ENCODE measurements at regions of chr3 and their contacts with region 1.

Region 1: DNA sequence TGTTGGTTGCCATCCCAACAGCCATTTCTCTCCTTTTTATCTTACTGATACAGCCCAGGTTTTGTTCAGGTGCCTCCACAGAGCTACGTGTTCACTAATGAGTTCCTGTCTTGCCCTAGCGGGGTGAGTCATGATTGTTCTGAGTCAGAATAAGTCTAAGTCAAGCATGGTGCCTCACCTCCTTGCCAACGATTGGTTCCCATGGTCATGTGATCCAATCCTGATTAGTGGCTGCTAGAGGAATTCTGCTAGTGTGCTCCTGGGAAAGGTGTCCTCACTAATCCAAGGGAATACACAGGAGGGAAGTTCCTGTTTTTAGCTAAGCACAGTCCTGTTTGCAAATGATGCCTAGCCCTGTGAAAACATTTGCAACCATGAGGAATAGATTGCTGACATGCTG is 99.8 kb downstream of the NSUN3 start:
- DNase-seq: no peak
- ATAC-seq: no peak
- H3K4me3 ChIP-seq: no peak overlapping the region
- H3K27ac ChIP-seq: no peak overlapping the region
- H3K4me1 ChIP-seq: no peaks in the 10 kb centered on the region
- H3K27me3 ChIP-seq: no peaks in the 10 kb centered on the region
- CTCF ChIP-seq: no peak
- POLR2A ChIP-seq: no peak

Region 2: GRCh38 chr3:93969443-93969842 is 193.3 kb before region 1 on chr3:
- in situ Hi-C with region 1: no loop called
- intact Hi-C with region 1: no loop called
- DNase-seq: no peak
- ATAC-seq: no peak
- H3K4me3 ChIP-seq: no peak overlapping the region
- H3K27ac ChIP-seq: no peak overlapping the region
- H3K4me1 ChIP-seq: peaks cover 3% of the 10 kb centered on the region in 2 donors
- H3K27me3 ChIP-seq: no peaks in the 10 kb centered on the region
- CTCF ChIP-seq: no peak
- POLR2A ChIP-seq: no peak

Region 3: DNA sequence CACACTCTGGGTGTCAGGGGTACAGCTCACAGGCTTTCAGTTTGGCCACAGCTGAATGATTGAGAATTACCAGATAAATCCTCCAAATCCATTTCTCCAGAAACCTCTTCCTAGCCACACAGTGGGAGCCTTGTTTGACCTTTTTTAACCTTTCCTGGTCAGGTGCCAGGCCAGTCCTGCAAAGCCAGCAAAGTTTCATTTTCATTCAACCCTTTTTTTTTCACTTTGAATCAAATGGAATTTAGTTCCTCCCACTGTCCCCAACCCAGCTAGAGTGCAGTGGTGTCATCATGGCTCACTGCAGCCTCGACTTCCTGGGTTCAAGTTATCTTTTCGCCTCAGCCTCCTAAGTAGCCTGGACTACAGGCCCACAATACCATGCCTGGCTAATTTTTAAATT is 32.0 kb before region 1 on chr3:
- in situ Hi-C with region 1: no loop called
- intact Hi-C with region 1: no loop called
- DNase-seq: no peak
- ATAC-seq: no peak
- H3K4me3 ChIP-seq: no peak overlapping the region
- H3K27ac ChIP-seq: no peak overlapping the region
- H3K4me1 ChIP-seq: no peaks in the 10 kb centered on the region
- H3K27me3 ChIP-seq: no peaks in the 10 kb centered on the region
- CTCF ChIP-seq: no peak
- POLR2A ChIP-seq: no peak

Region 4: GRCh38 chr3:94210256-94210655 is 47.6 kb after region 1 on chr3:
- in situ Hi-C with region 1: no loop called
- intact Hi-C with region 1: no loop called
- DNase-seq: no peak
- ATAC-seq: no peak
- H3K4me3 ChIP-seq: no peak overlapping the region
- H3K27ac ChIP-seq: no peak overlapping the region
- H3K4me1 ChIP-seq: no peaks in the 10 kb centered on the region
- H3K27me3 ChIP-seq: no peaks in the 10 kb centered on the region
- CTCF ChIP-seq: no peak
- POLR2A ChIP-seq: no peak

Region 5: GRCh38 chr3:94269763-94270162 is 107.1 kb after region 1 on chr3:
- in situ Hi-C with region 1: loop called in 1 of 4 experiments (anchors 25 kb)
- intact Hi-C with region 1: no loop called
- DNase-seq: no peak
- ATAC-seq: no peak
- H3K4me3 ChIP-seq: no peak overlapping the region
- H3K27ac ChIP-seq: no peak overlapping the region
- H3K4me1 ChIP-seq: no peaks in the 10 kb centered on the region
- H3K27me3 ChIP-seq: no peaks in the 10 kb centered on the region
- CTCF ChIP-seq: no peak
- POLR2A ChIP-seq: no peak

Region 6: DNA sequence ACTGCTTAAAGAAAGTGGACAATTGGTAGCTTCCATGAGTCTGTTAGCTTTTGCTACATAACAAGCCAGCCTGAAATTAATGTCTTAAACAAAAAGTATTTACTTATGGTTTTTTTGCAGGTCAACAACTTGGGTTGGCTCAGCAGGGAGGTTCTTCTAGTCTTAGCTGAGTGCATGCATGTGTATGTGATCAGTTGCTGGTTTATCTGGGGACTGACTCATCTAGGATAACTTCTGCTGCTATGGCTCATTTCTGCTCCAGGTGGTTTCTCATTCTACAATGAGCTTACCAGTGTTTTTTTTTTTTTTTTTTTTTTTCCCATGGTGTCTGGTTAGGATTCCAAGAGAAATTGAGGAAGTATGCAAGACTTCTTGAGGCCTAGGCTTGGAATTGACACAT is 144.9 kb after region 1 on chr3:
- in situ Hi-C with region 1: no loop called
- intact Hi-C with region 1: no loop called
- DNase-seq: no peak
- ATAC-seq: no peak
- H3K4me3 ChIP-seq: no peak overlapping the region
- H3K27ac ChIP-seq: no peak overlapping the region
- H3K4me1 ChIP-seq: no peaks in the 10 kb centered on the region
- H3K27me3 ChIP-seq: no peaks in the 10 kb centered on the region
- CTCF ChIP-seq: no peak
- POLR2A ChIP-seq: no peak

Measured in gastrocnemius medialis (tissue), 4 donors.